GM12878 (cell line): ENCODE measurements at regions of chr20 and their contacts with region 1.

Region 1: DNA sequence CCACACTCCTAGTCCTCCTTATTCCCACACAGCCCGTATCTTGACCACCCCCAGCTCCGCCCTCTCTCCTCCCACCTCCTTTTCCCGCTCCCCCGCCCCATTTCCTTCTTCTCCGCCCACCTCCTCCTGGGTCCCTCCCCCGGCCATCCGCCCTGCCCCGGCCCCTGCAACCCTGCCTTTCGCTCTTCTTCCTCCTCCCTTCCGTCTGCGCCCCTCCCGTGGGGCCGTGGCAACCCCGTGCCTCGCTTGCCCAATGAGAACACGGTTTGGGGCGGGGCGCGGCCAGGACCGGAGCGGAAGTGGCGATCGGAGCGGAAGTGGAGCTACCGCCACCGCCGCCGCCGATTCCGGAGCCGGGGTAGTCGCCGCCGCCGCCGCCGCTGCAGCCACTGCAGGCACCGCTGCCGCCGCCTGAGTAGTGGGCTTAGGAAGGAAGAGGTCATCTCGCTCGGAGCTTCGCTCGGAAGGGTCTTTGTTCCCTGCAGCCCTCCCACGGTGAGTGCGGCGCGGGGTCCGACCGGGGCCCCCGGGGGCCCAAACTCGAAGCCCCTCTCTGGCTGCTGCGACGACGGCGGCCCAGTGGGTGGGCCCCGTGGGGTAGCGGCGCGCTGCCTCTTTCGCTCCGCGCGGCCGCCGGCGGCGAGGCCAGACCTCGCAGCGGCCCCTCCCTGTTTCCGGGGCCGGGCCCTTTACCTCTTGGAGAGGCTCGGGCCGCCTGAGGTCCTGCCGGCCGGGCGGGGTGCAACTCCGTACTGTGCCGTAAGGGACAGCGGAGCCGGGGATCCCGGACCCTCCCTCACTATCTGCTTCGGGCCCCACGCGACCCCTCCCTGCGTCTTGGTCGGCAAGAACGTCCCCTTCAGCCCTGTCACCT is at the start of gene YWHAB:
- DNase-seq: peak; percentile 89
- ATAC-seq: peak; percentile 97
- H3K4me3 ChIP-seq: peak within 1 kb of the TSS; percentile 97
- H3K27ac ChIP-seq: peak within 1 kb of the TSS; percentile 92
- H3K4me1 ChIP-seq: peaks cover 17% of the 10 kb centered on the region
- H3K27me3 ChIP-seq: no peaks in the 10 kb centered on the region
- CTCF ChIP-seq: no peak; a peak in 1 of 6 replicates
- EP300 ChIP-seq: no peak
- POLR2A ChIP-seq: peak; percentile 93
- RAD21 ChIP-seq: no peak
- polyA plus RNA-seq, gene YWHAB: 136 to 153 TPM

Region 2: DNA sequence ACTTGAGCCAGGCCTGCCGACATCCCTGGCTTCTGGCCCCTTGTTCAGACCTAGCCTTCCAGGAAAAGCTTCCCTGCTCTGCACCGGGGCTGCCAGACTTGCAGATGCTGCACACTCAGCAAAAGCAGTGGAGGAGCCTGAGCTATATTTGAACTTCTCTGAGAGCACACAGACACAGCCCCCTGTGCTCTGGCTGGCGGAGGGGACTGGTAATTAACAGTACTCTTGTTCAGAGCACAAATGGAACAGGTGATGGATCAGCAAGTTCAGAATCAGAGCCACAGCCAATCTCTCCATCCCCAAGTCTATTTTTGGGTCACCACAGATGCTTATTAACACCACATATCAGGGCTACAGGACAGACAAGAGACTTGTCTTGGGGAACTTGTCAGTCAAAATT is 47.7 kb before region 1 on chr20:
- CTCF ChIA-PET with region 1: no interaction called
- POLR2A ChIA-PET with region 1: no interaction called
- RAD21 ChIA-PET with region 1: no interaction called
- SMC1A ChIA-PET with region 1: no interaction called
- in situ Hi-C with region 1: no loop called
- intact Hi-C with region 1: no loop called
- DNase-seq: no peak
- ATAC-seq: no peak
- H3K4me3 ChIP-seq: no peak overlapping the region
- H3K27ac ChIP-seq: no peak overlapping the region
- H3K4me1 ChIP-seq: no peaks in the 10 kb centered on the region
- H3K27me3 ChIP-seq: peaks cover under 1 to 2% of the 10 kb centered on the region in 2 experiments; a peak in 3 of 4 replicates
- CTCF ChIP-seq: no peak
- EP300 ChIP-seq: no peak
- POLR2A ChIP-seq: no peak
- RAD21 ChIP-seq: no peak

Region 3: DNA sequence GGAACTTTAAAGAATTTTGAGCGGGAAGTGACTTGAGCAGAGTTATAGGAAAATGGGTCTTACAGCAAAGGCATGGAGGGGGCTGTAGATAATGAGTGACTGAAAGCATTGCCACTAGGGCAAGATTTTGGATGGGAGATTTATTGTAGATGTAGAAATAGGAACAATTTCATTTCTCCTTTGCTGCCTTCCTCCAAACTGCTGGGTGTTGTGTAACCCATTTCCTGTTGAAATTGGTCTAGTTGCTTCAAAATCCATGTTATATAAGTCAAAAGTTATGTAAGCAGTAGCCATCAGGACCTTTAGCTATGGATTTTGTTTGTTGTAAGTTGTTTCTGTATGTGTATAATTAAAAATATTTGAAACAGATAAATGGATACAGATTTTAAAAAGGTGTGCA is 11.0 kb after region 1 on chr20:
- CTCF ChIA-PET with region 1: interaction called, 7 read pairs
- POLR2A ChIA-PET with region 1: interaction called, 4 read pairs
- RAD21 ChIA-PET with region 1: no interaction called
- SMC1A ChIA-PET with region 1: interaction called, 10 read pairs
- in situ Hi-C with region 1: no loop called
- intact Hi-C with region 1: no loop called
- DNase-seq: no peak
- ATAC-seq: no peak
- H3K4me3 ChIP-seq: no peak overlapping the region
- H3K27ac ChIP-seq: no peak overlapping the region
- H3K4me1 ChIP-seq: peaks cover 18% of the 10 kb centered on the region
- H3K27me3 ChIP-seq: no peaks in the 10 kb centered on the region
- CTCF ChIP-seq: no peak
- EP300 ChIP-seq: no peak
- POLR2A ChIP-seq: no peak
- RAD21 ChIP-seq: no peak

Region 4: DNA sequence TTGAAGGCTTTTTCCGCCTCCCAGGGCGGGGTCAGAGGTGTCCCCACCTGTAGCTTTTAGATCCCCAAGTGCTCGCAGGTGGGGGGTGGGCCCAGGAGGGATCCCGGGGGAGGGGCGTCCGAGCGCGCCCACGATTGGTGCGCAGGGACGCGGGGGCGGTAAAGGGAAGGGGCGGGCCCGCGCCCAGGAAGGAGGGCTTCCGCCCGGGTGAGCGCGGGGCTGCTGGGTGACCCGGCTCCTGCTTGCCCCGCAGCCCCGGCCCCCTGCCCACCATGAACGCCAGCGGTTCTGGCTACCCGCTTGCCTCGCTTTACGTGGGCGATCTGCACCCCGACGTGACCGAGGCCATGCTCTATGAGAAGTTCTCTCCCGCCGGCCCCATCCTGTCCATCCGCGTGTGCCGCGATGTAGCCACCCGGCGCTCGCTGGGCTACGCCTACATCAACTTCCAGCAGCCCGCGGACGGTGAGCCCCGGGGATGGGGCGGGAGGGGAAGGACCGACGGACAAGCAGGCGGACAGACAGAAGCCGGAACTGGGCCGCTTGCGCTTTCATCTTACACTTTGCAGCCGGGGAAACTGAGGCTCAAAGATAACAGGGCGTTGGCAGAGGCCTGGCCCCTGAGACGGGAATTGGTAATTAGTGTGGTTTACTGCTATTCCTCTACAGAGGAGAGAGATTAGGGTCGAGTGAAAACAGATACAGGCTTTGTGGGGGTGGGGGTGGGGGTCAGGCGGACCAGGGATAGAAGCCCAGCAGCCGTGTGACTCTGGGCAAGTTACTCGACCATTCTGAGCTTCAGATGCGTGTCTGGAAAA is 24.5 kb after region 1 on chr20 and contains the start of gene PABPC1L:
- CTCF ChIA-PET with region 1: interaction called, 11 read pairs
- POLR2A ChIA-PET with region 1: interaction called, 10 read pairs
- RAD21 ChIA-PET with region 1: interaction called, 6 read pairs
- SMC1A ChIA-PET with region 1: interaction called, 3 read pairs
- in situ Hi-C with region 1: no loop called
- intact Hi-C with region 1: no loop called
- DNase-seq: peak; percentile 13
- ATAC-seq: peak; percentile 98
- H3K4me3 ChIP-seq: peak within 1 kb of the TSS; percentile 91
- H3K27ac ChIP-seq: no peak within 1 kb of the TSS; the same call in 1 of the 2 replicates
- H3K4me1 ChIP-seq: peaks cover 3% of the 10 kb centered on the region
- H3K27me3 ChIP-seq: no peaks in the 10 kb centered on the region
- CTCF ChIP-seq: no peak
- EP300 ChIP-seq: no peak
- POLR2A ChIP-seq: peak; percentile 85
- RAD21 ChIP-seq: no peak
- polyA plus RNA-seq, gene PABPC1L: 6.1 to 7.1 TPM

Region 5: GRCh38 chr20:45008521-45009049 is 123.0 kb after region 1 on chr20:
- CTCF ChIA-PET with region 1: no interaction called
- POLR2A ChIA-PET with region 1: no interaction called
- RAD21 ChIA-PET with region 1: no interaction called
- SMC1A ChIA-PET with region 1: no interaction called
- in situ Hi-C with region 1: no loop called
- intact Hi-C with region 1: no loop called
- DNase-seq: no peak
- ATAC-seq: no peak
- H3K4me3 ChIP-seq: no peak overlapping the region
- H3K27ac ChIP-seq: no peak overlapping the region
- H3K4me1 ChIP-seq: no peaks in the 10 kb centered on the region
- H3K27me3 ChIP-seq: no peaks in the 10 kb centered on the region
- CTCF ChIP-seq: no peak
- EP300 ChIP-seq: no peak
- POLR2A ChIP-seq: no peak
- RAD21 ChIP-seq: no peak